Right ventricle myocardium superior (tissue), 1 donor: ENCODE measurements at regions of chr4 and their contacts with region 1.

Region 1: DNA sequence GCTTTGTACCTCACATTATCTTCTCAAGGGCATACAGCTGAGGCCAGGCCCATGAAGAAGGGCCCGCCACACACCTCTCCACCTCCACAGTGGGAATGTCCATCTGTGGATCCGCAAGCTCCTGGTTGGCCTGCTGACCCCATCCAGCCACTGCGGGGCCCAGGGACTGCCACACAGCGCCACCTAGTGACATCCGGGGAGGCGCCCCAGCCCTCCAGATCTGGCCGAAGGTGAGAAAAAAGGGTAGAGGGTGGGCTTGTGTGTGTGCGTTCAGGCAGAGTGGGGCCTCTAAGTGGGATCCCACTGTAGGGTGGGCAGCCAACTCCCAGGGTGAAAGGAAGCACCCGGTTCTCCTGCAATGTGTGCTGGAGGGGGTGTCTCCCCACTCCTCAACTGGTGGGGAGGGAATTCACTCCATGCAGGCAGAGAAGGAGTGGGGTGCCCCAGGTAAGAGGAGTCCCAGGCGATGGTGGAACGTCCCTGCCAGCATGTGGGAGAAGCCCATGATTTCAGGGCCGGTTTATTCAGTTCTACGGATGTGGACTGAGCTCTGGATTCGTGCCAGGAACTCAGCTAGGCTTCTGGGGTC is 117.3 kb downstream of the ENPP6 start:
- DNase-seq: peak; percentile 79
- ATAC-seq: peak; percentile 86

Region 2: DNA sequence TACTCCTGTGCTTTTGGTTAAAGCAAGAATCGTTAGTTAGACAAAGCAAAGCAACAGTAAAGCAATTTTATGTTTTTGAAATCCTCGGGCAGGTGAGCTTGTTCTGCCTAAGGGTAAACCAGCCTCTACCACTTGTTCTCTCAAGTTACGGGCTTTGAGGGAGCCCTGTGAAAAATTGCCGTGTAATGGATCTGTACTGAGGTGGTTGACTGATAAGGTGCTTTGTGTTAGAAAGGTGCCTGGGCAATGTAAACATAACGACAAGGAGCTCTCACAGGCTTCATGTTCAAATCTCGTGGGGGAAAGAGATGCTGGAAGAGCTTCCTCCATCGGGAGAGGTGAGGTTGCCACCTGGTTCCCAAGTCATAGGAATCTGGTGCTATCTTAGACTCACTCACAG is 329.5 kb before region 1 on chr4:
- intact Hi-C with region 1: no loop called
- DNase-seq: no peak
- ATAC-seq: no peak

Region 3: DNA sequence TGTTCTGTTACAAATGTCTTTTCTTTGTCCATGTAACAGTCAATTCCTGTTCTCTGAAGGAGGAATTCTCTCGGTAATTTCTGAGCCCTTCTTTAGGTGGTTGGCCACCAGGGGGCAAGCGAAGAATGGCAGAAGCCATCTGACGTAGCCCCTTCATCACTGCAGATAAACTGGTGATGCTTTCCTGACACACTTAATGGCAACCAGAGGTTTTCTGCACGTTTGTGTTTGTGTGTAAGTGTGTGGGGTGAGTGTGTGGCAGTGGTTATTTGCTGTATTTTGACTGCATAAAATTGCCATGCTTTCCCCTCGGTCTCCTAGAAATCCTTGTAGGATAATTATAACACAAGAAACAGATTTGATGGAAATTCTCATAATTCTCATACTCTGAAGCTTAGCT is 260.1 kb before region 1 on chr4:
- intact Hi-C with region 1: loop called (anchors 2 kb)
- DNase-seq: peak; percentile 85
- ATAC-seq: peak; percentile 86

Region 4: GRCh38 chr4:184122631-184123408 is 22.4 kb after region 1 on chr4:
- intact Hi-C with region 1: no loop called
- DNase-seq: no peak
- ATAC-seq: no peak